ENCODE measurements at regions of chr6 and their contacts with region 1.

Region 1: GRCh38 chr6:36302227-36302976 is 32.5 kb downstream of the PNPLA1 start:
- DNase-seq: peak; percentile 96
- ATAC-seq: peak; percentile 99
- H3K4me3 Mint-ChIP-seq: no peak overlapping the region
- H3K27ac Mint-ChIP-seq: no peak overlapping the region
- H3K4me1 Mint-ChIP-seq: no peaks in the 10 kb centered on the region
- H3K27me3 Mint-ChIP-seq: peaks cover 3% of the 10 kb centered on the region

Region 2: DNA sequence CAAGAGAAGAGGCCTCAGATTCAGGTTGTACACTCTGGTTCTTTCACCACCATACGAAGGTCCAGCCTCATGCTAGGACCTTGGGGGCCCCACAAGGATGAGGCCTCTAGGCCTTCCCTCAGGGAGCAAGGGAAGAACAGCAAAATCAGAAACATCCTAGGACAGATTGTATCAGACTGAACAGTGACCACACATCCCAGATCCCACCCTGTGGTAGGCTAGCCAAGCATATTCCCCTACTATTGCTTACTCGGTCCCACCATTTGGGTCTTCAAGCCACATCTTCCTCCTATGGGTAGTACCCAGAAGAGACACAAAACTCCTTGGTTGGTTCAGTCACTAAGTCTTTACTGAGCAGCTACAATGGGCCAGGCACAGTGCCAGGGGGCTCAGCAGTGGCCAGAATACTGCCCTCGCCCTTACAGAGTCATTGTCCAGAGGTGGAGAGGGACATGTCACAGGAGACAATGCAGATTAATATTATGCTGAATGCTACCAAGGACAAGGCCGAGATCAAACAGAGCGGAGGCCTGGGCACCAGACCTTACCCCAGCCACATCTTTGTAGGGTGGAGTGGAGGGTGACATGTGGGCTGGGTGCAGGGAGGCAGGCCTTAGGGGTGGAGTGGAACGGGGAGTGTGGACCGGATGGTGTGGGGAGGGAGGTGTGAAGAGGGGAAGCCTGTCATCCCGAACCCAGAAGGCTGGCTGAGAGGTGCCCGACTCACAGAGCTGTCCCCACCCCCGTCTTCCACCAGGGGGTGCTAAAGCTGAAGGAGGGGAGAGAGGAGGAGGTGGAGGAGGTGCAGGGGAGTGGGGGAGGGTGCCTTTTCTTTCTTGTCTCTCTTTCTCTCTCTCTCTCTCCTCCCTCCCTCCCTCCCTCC is 178.9 kb before region 1 on chr6:
- CTCF ChIA-PET with region 1: interaction called, 4 read pairs
- POLR2A ChIA-PET with region 1: no interaction called
- intact Hi-C with region 1: loop called in 1 of 2 experiments (anchors 1 kb)
- DNase-seq: peak; percentile 95
- ATAC-seq: peak; percentile 77
- H3K4me3 Mint-ChIP-seq: peak overlapping the region; percentile 27
- H3K27ac Mint-ChIP-seq: peak overlapping the region; percentile 64
- H3K4me1 Mint-ChIP-seq: peaks cover 89% of the 10 kb centered on the region
- H3K27me3 Mint-ChIP-seq: no peaks in the 10 kb centered on the region

Region 3: DNA sequence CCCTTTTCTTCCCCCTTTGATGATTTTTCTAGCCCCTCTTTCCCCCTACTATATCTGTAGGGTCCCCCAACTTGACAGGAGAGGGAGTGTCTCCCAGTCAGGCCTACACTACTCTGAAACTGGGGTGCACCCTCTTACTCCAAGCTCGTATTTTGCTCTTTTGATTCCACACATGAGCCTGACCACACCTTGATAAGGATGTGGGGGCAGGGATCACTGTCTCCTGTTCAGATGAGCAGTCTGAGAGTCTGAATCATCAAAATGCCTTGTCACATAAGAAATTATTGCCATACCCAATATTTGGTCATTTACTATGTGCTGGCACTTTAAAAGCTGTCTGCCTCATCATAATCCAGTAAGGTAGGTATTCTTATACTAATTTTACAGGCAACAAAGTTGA is 16.6 kb before region 1 on chr6:
- CTCF ChIA-PET with region 1: interaction called, 18 read pairs
- POLR2A ChIA-PET with region 1: no interaction called
- intact Hi-C with region 1: no loop called
- DNase-seq: no peak
- ATAC-seq: no peak
- H3K4me3 Mint-ChIP-seq: no peak overlapping the region
- H3K27ac Mint-ChIP-seq: no peak overlapping the region
- H3K4me1 Mint-ChIP-seq: peaks cover 7% of the 10 kb centered on the region
- H3K27me3 Mint-ChIP-seq: peaks cover 36% of the 10 kb centered on the region

Region 4: DNA sequence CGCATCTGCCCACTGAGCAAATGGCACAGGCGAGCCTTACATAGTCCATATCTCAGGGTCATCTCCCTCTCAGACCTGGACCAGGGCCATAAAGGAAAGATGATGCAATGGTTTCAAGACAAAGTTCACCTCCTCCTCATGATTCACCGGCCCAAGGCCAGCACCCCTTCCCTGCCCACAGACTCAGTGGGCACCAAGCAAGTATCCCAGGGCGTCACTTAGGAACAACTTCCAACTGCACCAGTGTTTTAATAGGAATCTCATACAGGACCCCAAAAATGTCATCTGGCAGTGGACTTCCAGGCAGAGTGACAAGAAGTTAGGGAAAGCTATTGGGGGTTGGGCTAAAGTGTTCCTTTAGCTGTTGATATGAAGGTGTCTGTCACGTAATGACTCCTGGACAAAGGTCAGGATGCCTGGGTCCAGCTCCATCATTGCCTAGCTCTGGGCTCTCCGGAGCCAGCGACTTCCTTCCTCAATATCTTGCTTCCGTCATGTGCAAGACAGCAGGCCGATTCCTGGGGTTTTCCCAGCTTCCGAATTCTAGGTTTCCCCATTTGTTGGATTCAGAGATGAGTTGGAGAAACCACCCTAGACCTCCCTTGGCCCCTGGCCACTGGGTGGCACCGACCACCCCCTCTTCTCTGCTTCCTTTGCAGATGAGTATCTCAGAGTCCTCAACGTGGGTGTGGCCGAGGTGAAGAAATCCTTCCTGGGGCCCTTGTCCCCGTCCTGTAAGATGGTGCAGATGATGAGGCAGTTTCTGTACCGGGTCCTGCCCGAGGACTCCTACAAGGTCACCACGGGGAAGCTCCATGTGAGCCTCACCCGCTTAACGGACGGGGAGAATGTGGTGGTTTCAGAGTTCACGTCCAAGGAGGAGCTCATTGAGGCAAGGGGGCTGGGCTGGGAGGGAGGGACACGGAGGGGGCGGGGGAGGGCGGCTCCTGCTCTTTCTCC is 11.5 kb before region 1 on chr6:
- CTCF ChIA-PET with region 1: interaction called, 18 read pairs
- POLR2A ChIA-PET with region 1: no interaction called
- intact Hi-C with region 1: no loop called
- DNase-seq: no peak
- ATAC-seq: no peak
- H3K4me3 Mint-ChIP-seq: no peak overlapping the region
- H3K27ac Mint-ChIP-seq: no peak overlapping the region
- H3K4me1 Mint-ChIP-seq: peaks cover 7% of the 10 kb centered on the region
- H3K27me3 Mint-ChIP-seq: peaks cover 1% of the 10 kb centered on the region

Region 5: GRCh38 chr6:36312854-36313648 is 10.6 kb after region 1 on chr6:
- CTCF ChIA-PET with region 1: interaction called, 12 read pairs
- POLR2A ChIA-PET with region 1: no interaction called
- intact Hi-C with region 1: no loop called
- DNase-seq: no peak
- ATAC-seq: no peak
- H3K4me3 Mint-ChIP-seq: no peak overlapping the region
- H3K27ac Mint-ChIP-seq: no peak overlapping the region
- H3K4me1 Mint-ChIP-seq: no peaks in the 10 kb centered on the region
- H3K27me3 Mint-ChIP-seq: peaks cover 2% of the 10 kb centered on the region

Region 6: GRCh38 chr6:36320479-36320890 is 18.1 kb after region 1 on chr6:
- CTCF ChIA-PET with region 1: interaction called, 10 read pairs
- POLR2A ChIA-PET with region 1: no interaction called
- intact Hi-C with region 1: no loop called
- DNase-seq: no peak
- ATAC-seq: no peak
- H3K4me3 Mint-ChIP-seq: no peak overlapping the region
- H3K27ac Mint-ChIP-seq: no peak overlapping the region
- H3K4me1 Mint-ChIP-seq: no peaks in the 10 kb centered on the region
- H3K27me3 Mint-ChIP-seq: no peaks in the 10 kb centered on the region

Region 7: GRCh38 chr6:36360241-36361054 is 58.0 kb after region 1 on chr6:
- CTCF ChIA-PET with region 1: interaction called, 54 read pairs
- POLR2A ChIA-PET with region 1: no interaction called
- intact Hi-C with region 1: loop called (anchors 1 kb)
- DNase-seq: peak; percentile 85
- ATAC-seq: peak; percentile 81
- H3K4me3 Mint-ChIP-seq: no peak overlapping the region
- H3K27ac Mint-ChIP-seq: no peak overlapping the region
- H3K4me1 Mint-ChIP-seq: peaks cover 22% of the 10 kb centered on the region
- H3K27me3 Mint-ChIP-seq: peaks cover 6% of the 10 kb centered on the region